ENCODE measurements at regions of chr7 and their contacts with region 1.

Region 1: DNA sequence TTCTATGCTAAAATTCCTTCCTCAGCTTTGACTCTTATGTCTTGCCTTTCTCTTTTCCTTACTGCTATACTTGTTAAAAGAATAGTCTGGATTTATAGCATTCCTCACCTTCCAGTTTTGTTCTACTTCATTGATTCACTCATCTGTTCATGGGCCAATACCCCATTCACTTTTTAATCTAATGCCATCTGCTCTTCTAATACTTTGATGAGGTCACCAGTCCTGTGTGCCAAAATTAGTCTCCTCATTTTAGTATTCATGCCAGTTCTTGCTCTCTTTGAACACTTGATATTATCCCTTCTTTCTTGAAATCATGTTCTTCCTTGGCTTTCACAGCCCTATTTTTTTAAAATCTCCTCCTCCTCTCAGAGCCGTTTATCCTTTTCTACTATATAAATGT is 19.4 kb downstream of the STK17A start:
- DNase-seq: no peak
- ATAC-seq: no peak
- H3K4me3 Mint-ChIP-seq: no peak overlapping the region
- H3K27ac Mint-ChIP-seq: no peak overlapping the region
- H3K4me1 Mint-ChIP-seq: peaks cover 22 to 54% (median 48%) of the 10 kb centered on the region in 4 donors
- H3K27me3 Mint-ChIP-seq: no peaks in the 10 kb centered on the region

Region 2: GRCh38 chr7:43565786-43566185 is 36.5 kb before region 1 on chr7:
- POLR2A ChIA-PET with region 1: no interaction called
- DNase-seq: no peak
- ATAC-seq: no peak
- H3K4me3 Mint-ChIP-seq: no peak overlapping the region
- H3K27ac Mint-ChIP-seq: no peak overlapping the region
- H3K4me1 Mint-ChIP-seq: peaks cover 0 to 2% (median under 1%) of the 10 kb centered on the region in 4 donors
- H3K27me3 Mint-ChIP-seq: peaks cover 3 to 20% (median 11%) of the 10 kb centered on the region in 5 donors

Region 3: GRCh38 chr7:43612599-43613589 is 10.6 kb after region 1 on chr7:
- POLR2A ChIA-PET with region 1: interaction called, 15 read pairs
- DNase-seq: no peak
- ATAC-seq: peak; percentile 29 to 40
- H3K4me3 Mint-ChIP-seq: peak overlapping the region; percentile 8 to 73 (median 55)
- H3K27ac Mint-ChIP-seq: peak overlapping the region in 9 of 10 donors; percentile 72 to 93 (median 90)
- H3K4me1 Mint-ChIP-seq: peaks cover 39 to 77% (median 54%) of the 10 kb centered on the region in 4 donors
- H3K27me3 Mint-ChIP-seq: no peaks in the 10 kb centered on the region

Region 4: GRCh38 chr7:43658718-43659548 is 56.7 kb after region 1 on chr7:
- POLR2A ChIA-PET with region 1: no interaction called
- DNase-seq: no peak
- ATAC-seq: peak; percentile 30 to 45
- H3K4me3 Mint-ChIP-seq: peak overlapping the region; percentile 27 to 83 (median 57)
- H3K27ac Mint-ChIP-seq: peak overlapping the region; percentile 37 to 94 (median 86)
- H3K4me1 Mint-ChIP-seq: peaks cover 35 to 57% (median 54%) of the 10 kb centered on the region in 4 donors
- H3K27me3 Mint-ChIP-seq: no peaks in the 10 kb centered on the region